ENCODE measurements at regions of chr17 and their contacts with region 1.

Region 1: DNA sequence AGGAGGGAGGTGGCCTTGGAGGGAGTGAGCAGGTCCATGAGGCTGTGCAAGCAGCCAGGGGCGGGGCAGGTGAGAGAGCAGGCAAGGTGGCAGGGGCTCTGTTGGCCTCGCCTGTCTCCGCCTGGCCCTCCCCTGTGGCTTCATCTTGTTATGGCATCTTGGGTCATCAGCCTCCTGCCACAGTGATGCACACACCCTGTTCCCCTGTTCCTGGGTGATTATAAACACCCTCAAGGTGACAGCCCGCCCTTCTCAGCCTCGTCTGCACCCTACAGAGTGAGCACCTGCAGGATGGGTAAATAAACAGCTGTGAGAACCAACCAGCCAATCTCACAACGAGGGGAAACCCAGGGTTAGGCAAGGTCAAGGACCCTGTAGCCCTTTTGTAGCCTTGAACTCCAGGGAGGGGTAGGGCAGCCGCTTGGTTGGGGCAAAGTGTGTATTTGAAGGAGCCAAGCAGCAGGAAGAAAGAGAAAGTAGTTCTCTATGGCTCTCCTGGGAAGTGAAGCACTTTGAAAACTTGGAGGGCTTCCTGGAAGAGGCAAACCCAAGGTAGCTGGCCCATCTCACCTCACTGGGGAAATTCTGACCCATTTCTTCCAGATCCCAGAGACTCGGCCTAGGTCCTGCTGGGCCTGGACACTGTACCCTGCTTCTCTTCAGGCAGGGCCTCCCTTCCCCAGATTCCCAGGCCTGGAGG is 60.6 kb downstream of the NT5M start:
- DNase-seq: no peak
- H3K4me3 ChIP-seq: no peak overlapping the region
- H3K27ac ChIP-seq: no peak overlapping the region
- H3K4me1 ChIP-seq: no peaks in the 10 kb centered on the region
- H3K27me3 ChIP-seq: no peaks in the 10 kb centered on the region
- CTCF ChIP-seq: no peak

Region 2: DNA sequence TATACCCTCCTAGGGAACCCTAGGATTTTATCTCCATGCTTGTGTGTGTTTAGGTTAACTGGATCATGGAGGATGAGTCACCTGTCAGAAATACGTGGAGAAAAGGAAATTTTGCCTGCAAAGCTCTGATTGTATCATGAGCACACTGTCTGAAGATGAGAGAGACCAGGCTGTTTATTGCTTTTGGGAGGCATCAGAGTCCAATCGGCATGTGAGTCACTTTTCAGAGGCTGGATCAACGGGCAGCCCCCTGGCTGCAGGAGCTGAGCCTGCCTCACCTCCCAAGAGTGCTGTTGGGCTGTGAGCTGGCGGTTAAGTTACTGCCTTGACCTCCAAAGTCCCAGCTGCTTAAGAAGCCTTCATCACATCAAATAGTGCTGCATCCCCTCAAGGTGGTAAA is 71.5 kb after region 1 on chr17:
- intact Hi-C with region 1: loop called (anchors 5 kb)
- DNase-seq: no peak
- H3K4me3 ChIP-seq: no peak overlapping the region
- H3K27ac ChIP-seq: no peak overlapping the region
- H3K4me1 ChIP-seq: no peaks in the 10 kb centered on the region
- H3K27me3 ChIP-seq: no peaks in the 10 kb centered on the region
- CTCF ChIP-seq: no peak

Measured in colonic mucosa (tissue), 4 donors.